WTC11 (cell line): ENCODE measurements at regions of chr12 and their contacts with region 1.

Region 1: DNA sequence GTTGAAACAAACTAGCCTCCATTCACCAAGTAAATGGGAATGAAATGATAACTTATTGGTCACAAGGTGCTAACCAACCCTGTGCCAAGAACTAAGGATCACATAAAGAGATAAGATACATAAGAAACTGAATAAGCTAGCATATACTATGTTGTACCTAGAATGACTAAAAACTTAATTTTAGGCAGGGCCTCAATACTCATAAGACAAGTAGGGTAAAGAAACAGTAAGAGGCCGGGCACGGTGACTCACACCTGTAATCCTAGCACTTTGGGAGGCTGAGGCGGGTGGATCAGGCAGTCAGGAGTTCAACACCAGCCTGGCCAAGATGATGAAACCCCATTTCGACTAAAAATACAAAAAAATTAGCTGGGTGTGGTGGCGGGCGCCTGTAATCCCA is 17.7 kb downstream of the GDF11 start:
- DNase-seq: no peak
- ATAC-seq: no peak
- H3K4me3 Mint-ChIP-seq: no peak overlapping the region
- H3K27ac Mint-ChIP-seq: no peak overlapping the region
- H3K4me1 Mint-ChIP-seq: peaks cover 3% of the 10 kb centered on the region
- H3K27me3 Mint-ChIP-seq: no peaks in the 10 kb centered on the region
- CTCF ChIP-seq: no peak

Region 2: DNA sequence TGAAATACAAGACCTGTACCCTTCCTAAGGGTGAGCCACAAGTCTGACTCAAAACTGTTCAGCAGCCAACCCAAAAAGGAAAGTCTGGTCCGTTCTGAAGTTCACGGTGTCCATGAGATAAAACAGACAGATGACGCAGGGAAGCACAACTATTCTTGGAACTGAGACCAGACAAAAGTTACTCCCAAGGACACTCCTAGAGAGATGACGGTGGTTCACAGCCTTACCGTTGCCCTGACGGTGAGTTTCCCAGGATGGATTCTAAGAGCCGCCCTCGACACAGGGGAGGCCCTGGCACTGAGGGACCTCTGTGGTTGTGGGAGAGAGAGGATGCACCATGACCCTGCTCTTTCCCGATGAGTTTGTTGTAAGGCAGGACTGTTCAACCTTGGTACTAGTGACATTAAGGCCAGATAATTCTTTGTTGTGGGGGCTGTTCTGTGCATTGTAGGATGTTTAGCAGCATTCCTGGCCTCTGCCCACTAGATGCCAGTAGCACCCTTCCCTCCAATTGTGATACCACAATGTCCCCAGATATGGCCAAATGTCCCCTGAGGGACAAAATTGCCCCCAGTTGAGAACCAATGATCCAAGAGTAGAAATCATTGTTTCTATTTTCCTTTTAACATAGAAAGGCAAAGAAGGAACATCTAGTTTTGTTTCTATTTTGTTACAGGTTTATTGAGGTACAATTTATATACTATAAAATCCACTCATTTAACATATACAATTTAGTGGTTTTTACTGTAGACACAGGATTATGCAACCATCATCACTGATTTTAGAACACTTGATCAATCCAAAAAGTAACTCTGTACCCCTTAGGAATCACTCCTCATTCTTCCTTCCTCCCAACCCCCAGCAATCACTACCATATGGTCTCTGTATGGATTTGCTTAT is 100.9 kb before region 1 on chr12:
- CTCF ChIA-PET with region 1: no interaction called
- POLR2A ChIA-PET with region 1: no interaction called
- DNase-seq: no peak
- ATAC-seq: peak; percentile 54
- H3K4me3 Mint-ChIP-seq: no peak overlapping the region
- H3K27ac Mint-ChIP-seq: no peak overlapping the region
- H3K4me1 Mint-ChIP-seq: no peaks in the 10 kb centered on the region
- H3K27me3 Mint-ChIP-seq: peaks cover 9% of the 10 kb centered on the region
- CTCF ChIP-seq: no peak

Region 3: GRCh38 chr12:55771736-55772135 is 11.1 kb after region 1 on chr12:
- CTCF ChIA-PET with region 1: no interaction called
- POLR2A ChIA-PET with region 1: no interaction called
- DNase-seq: no peak
- ATAC-seq: no peak
- H3K4me3 Mint-ChIP-seq: no peak overlapping the region
- H3K27ac Mint-ChIP-seq: no peak overlapping the region
- H3K4me1 Mint-ChIP-seq: no peaks in the 10 kb centered on the region
- H3K27me3 Mint-ChIP-seq: no peaks in the 10 kb centered on the region
- CTCF ChIP-seq: no peak

Region 4: GRCh38 chr12:55839345-55840140 is 78.9 kb after region 1 on chr12:
- CTCF ChIA-PET with region 1: no interaction called
- POLR2A ChIA-PET with region 1: interaction called, 15 read pairs
- DNase-seq: no peak
- ATAC-seq: no peak
- H3K4me3 Mint-ChIP-seq: no peak overlapping the region
- H3K27ac Mint-ChIP-seq: no peak overlapping the region; the same call in 1 of the 2 replicates
- H3K4me1 Mint-ChIP-seq: peaks cover 13% of the 10 kb centered on the region
- H3K27me3 Mint-ChIP-seq: peaks cover 4% of the 10 kb centered on the region; the same call in 1 of the 2 replicates
- CTCF ChIP-seq: no peak